Posterior vena cava (tissue), 2 donors: ENCODE measurements at regions of chr20 and their contacts with region 1.

Region 1: DNA sequence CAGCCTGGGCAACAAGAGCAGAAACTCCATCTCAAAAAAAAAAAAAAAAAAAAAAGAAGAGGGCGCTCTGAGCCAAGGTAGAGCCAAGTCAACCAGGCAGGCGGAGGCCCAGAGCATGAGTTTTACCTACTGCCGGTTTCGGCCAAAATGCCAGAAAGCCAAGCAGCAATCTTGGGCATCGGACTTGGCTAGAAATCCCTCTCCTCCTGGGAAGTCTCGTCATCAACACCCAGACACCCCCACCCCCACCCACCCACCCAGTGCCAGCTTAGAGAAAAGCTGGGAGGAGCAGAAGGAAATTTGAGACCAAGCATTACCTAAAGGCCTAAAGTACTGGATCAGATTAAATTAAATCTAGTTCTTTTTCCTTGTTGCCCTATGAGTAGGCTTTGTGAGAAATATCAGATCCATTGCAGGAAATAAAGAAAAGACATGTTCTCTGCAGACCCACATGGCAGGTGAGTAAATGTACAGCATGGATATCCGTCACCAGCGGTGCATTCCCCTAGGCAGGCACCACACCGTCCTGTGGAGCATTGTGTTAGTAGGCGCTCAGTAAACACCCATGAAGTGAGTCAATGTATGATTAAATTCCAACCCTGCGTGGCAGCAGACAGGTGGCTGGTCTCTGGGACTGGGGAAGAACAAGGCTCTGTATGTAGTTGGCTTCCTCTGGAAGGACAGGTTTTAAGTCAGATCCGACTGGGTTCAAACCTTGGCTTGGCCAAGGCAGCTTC is 21.0 kb downstream of the RIPOR3 start:
- DNase-seq: no peak

Region 2: GRCh38 chr20:51899668-51900067 is 1229.4 kb after region 1 on chr20:
- intact Hi-C with region 1: loop called in 1 of 2 experiments (anchors 10 kb)
- DNase-seq: no peak